OCI-LY7 (cell line): ENCODE measurements at regions of chr5 and their contacts with region 1.

Region 1: GRCh38 chr5:125006011-125006685 is 259.7 kb upstream of the ZNF608 start:
- DNase-seq: peak; percentile 97
- H3K4me3 ChIP-seq: peak overlapping the region; percentile 55
- H3K27ac ChIP-seq: peak overlapping the region; percentile 100
- H3K4me1 ChIP-seq: peaks cover 91% of the 10 kb centered on the region
- CTCF ChIP-seq: no peak

Region 2: DNA sequence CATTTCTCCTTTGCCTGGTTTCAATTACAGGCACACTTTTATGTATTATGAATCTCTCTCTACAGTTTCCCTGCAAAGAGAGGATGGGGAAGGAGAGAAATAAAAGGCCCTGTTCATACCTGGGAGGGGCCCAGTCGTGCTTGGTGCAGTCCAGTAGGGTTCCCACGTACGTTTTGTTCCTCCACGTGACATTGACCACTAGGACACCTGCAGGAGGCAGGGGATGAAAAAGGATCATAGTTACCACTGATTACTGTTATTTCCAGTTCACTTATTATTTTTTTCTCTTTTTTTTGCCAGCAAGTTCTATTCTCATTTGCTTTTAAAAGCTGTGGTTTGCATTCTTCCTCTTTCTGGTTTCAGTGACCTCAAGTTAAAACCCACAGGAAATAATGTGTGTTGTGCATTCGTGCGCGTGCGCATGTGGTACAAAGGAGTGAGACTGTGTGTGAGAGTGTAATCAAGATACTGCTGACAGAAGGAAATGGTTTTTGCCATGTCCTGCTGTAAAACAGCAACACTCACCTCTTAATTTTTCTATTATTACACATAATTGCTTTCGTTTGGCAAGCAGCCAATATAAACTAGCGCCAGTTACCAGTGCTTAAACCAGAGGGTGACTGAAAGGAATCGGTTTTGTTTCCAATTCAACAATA is 356.5 kb before region 1 on chr5:
- CTCF ChIA-PET with region 1: no interaction called
- POLR2A ChIA-PET with region 1: interaction called, 3 read pairs
- intact Hi-C with region 1: loop called (anchors 1 kb)
- DNase-seq: peak; percentile 98
- H3K4me3 ChIP-seq: peak overlapping the region; percentile 69
- H3K27ac ChIP-seq: peak overlapping the region; percentile 95
- H3K4me1 ChIP-seq: peaks cover 97% of the 10 kb centered on the region
- CTCF ChIP-seq: no peak

Region 3: DNA sequence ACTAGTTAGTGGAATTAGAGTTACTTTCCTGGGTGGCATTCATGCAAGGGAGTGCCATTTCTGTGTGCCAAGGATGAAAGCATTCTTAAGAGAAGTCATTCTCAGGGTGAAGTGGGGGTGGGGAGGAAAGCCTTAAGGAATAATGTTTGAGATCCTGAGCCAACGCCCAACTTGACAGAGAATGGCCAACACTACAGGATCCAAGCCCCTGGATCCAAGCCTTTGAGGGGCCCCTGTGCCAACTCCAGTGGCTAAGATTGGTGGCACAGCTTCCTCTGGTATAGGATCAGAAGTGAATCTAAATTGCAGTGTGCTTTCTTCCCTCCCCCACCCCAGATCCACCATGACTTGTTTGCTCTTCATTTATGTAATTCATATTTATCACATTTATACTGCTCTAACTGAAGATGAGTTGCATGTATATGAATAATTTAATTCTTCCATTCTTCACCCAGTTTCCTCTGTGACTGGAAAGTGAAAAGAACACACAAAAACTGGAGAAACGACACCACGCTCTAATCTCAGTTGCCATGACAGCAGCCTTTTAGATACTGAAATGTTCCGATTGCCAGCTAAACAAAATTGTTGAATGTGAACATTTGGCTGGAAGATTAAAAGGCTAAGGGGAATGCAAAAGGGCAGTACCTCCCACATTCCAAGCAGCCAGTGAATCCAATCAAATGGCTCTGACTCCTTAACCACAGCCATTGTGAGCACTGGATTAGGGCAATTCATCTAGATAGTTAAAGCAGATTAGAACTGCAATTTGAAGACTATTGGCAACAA is 264.2 kb before region 1 on chr5:
- CTCF ChIA-PET with region 1: interaction called, 4 read pairs
- POLR2A ChIA-PET with region 1: interaction called, 54 read pairs
- intact Hi-C with region 1: loop called (anchors 1 kb)
- DNase-seq: peak; percentile 44
- H3K4me3 ChIP-seq: peak overlapping the region; percentile 85
- H3K27ac ChIP-seq: peak overlapping the region; percentile 97
- H3K4me1 ChIP-seq: peaks cover 52% of the 10 kb centered on the region
- CTCF ChIP-seq: no peak

Region 4: GRCh38 chr5:124920909-124921666 is 85.1 kb before region 1 on chr5:
- CTCF ChIA-PET with region 1: interaction called, 3 read pairs
- POLR2A ChIA-PET with region 1: interaction called, 10 read pairs
- intact Hi-C with region 1: loop called (anchors 2 kb)
- DNase-seq: peak; percentile 90
- H3K4me3 ChIP-seq: peak overlapping the region; percentile 62
- H3K27ac ChIP-seq: peak overlapping the region; percentile 88
- H3K4me1 ChIP-seq: peaks cover 66% of the 10 kb centered on the region
- CTCF ChIP-seq: peak; percentile 36; the same call in 1 of the 2 replicates

Region 5: DNA sequence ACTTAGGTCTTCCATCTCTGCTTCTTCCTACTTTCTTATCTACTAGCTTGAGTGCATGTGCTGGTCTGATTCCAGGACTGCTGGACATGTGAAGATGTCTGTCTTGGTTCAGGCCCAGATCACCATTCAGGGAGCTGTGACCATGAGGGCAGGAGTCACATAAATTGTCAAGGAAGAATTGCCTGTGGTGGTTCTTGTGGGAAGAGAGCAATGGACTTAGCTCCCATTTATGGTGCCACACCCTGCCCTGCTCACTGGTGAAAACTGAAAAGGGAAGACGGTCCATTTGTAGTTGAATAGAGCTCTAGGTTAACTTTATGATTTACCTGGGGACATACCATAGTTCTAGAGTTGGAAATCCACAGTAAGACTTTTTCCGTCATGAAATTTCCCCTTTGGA is 15.4 kb before region 1 on chr5:
- CTCF ChIA-PET with region 1: no interaction called
- POLR2A ChIA-PET with region 1: interaction called, 29 read pairs
- intact Hi-C with region 1: no loop called
- DNase-seq: no peak
- H3K4me3 ChIP-seq: no peak overlapping the region
- H3K27ac ChIP-seq: no peak overlapping the region
- H3K4me1 ChIP-seq: peaks cover 18% of the 10 kb centered on the region
- CTCF ChIP-seq: no peak